Head of caudate nucleus (tissue), 42 donors: ENCODE measurements at regions of chr17 and their contacts with region 1.

Region 1: GRCh38 chr17:52306314-52306713 is 147.8 kb upstream of the CA10 start:
- DNase-seq: no peak

Region 2: DNA sequence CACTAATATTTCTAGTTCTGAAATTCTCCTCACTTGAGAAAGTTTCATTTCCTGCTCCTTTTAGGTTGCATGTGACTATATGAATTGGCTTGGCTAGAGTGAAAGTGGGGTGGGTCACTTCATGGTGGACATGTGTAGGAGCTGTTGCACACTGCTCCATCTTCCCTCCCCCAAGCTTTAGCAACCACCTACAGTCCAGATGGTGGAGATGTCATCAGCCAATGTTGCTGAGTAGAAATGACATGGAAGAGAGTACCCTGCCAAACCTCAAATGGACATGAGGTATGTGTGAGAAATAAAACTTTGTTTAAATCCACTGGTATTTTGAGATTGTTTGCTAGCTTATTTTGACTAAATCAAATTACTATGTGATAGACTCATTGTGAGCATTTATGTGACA is 429.3 kb before region 1 on chr17:
- intact Hi-C with region 1: loop called (anchors 10 kb)
- DNase-seq: no peak

Region 3: DNA sequence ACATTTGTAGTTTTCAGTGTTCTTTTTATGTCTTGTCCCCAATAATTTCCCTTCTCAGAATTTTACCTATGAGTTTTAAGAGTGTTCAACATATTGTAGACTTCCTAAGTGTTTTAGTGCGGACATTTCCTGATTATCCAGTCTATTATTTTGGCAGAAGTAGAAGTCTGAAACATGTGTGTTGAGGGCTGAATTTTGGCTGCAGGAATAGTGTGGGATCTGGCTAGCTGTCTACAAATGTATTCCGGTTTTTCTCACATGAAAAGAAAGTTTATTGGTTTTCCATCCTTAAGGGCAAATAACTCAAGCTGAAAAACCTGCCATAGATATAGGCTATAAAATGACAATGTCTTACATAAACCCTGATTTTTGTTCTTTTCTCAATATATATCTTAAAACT is 114.8 kb before region 1 on chr17:
- intact Hi-C with region 1: no loop called
- DNase-seq: no peak

Region 4: DNA sequence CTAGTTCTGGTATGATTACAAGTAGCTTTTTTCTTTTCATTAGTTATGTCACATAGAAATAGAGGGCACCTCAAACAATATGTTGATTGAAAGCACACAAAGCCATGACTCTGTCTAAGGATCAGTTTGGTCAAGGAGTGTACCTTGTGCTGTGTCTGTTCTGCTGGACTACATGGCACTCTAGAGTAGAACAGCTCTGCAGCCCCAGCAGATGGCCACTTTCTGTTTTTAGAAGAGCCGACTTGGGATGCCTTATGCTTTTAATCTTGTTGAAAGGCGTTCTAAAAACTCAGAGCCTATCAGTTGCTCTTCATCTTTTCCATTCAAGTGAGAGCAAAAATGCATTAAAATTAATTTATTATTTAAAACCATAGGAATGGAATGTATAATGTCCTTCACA is 98.5 kb before region 1 on chr17:
- intact Hi-C with region 1: no loop called
- DNase-seq: no peak

Region 5: GRCh38 chr17:52368886-52369285 is 62.6 kb after region 1 on chr17:
- intact Hi-C with region 1: no loop called
- DNase-seq: no peak

Region 6: GRCh38 chr17:52395308-52395707 is 89.0 kb after region 1 on chr17:
- intact Hi-C with region 1: no loop called
- DNase-seq: no peak